ENCODE measurements at regions of chr2 and their contacts with region 1.

Region 1: DNA sequence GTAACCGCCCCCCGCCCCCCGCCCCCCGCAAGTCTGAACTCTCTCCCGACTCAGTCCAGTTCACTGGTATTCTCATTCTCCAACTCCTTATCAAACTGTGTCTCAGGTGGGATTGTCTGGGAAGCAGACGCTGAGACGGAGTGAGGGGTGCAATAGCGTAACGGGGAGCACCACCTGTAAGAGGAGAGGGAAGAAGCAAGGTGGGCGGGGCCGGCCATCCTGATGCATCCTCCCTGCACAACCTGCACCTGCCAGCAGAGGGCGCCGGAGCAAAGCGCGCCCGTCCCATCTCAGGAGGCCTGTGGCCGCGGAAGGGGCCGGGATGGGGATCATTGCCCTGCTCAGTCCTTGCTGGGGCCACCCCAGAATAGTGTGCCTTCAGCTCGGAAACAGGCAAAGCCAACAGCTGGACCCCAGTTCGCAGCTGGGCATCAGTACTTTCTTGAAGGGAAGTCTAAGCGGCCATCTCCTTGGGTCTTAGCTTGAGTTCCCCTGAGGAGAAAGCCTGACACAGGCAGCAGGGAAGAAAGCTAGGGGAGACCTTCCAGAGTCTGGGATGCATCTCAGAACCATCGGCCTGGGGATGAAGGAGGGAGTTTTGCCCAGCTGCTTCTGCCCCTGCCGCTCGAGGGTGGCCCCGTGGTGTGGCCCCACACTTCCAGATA is 208.0 kb downstream of the TFCP2L1 start:
- DNase-seq: peak; percentile 68 to 86
- H3K4me3 ChIP-seq: peak overlapping the region; percentile 27; the same call in 1 of the 2 replicates
- H3K27ac ChIP-seq: no peak overlapping the region
- H3K4me1 ChIP-seq: peaks cover 16% of the 10 kb centered on the region; the same call in 1 of the 2 replicates
- H3K27me3 ChIP-seq: 0 out of 2 replicates have a peak, but pooled peaks cover 5% of the 10 kb centered on the region
- CTCF ChIP-seq: peak; percentile 100

Region 2: GRCh38 chr2:120312861-120313694 is 763.9 kb before region 1 on chr2:
- CTCF ChIA-PET with region 1: no interaction called
- POLR2A ChIA-PET with region 1: no interaction called
- intact Hi-C with region 1: loop called (anchors 5 kb)
- DNase-seq: peak; percentile 77 to 90
- H3K4me3 ChIP-seq: no peak overlapping the region
- H3K27ac ChIP-seq: no peak overlapping the region
- H3K4me1 ChIP-seq: no peaks in the 10 kb centered on the region
- H3K27me3 ChIP-seq: no peaks in the 10 kb centered on the region
- CTCF ChIP-seq: peak; percentile 98

Region 3: DNA sequence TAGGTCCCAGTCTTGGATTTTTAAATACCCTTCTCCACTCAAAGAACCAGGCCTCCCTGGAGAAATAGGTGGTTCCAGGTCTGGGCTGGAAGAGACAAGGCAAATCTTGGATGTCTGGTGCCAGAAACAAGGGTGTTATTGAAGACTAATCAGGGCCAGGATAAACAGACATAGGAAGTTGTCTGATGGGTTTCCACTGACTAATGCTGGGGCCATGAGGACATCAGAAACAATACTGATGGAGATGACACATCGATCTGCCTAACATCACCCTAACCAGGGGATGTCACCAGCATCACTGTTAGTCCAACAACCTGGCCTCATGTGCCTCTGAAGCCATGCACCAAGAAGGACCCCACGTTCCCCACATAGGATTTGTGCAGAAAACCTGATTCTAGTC is 383.9 kb before region 1 on chr2:
- CTCF ChIA-PET with region 1: interaction called, 9 read pairs
- POLR2A ChIA-PET with region 1: interaction called, 11 read pairs
- intact Hi-C with region 1: loop called (anchors 1 kb)
- DNase-seq: no peak
- H3K4me3 ChIP-seq: no peak overlapping the region
- H3K27ac ChIP-seq: no peak overlapping the region
- H3K4me1 ChIP-seq: no peaks in the 10 kb centered on the region
- H3K27me3 ChIP-seq: peaks cover 68% of the 10 kb centered on the region
- CTCF ChIP-seq: no peak

Region 4: GRCh38 chr2:120914839-120915521 is 162.0 kb before region 1 on chr2:
- CTCF ChIA-PET with region 1: no interaction called
- POLR2A ChIA-PET with region 1: interaction called, 16 read pairs
- intact Hi-C with region 1: no loop called
- DNase-seq: peak; percentile 46 to 87
- H3K4me3 ChIP-seq: no peak overlapping the region
- H3K27ac ChIP-seq: no peak overlapping the region
- H3K4me1 ChIP-seq: peaks cover 21% of the 10 kb centered on the region
- H3K27me3 ChIP-seq: no peaks in the 10 kb centered on the region
- CTCF ChIP-seq: no peak

Region 5: DNA sequence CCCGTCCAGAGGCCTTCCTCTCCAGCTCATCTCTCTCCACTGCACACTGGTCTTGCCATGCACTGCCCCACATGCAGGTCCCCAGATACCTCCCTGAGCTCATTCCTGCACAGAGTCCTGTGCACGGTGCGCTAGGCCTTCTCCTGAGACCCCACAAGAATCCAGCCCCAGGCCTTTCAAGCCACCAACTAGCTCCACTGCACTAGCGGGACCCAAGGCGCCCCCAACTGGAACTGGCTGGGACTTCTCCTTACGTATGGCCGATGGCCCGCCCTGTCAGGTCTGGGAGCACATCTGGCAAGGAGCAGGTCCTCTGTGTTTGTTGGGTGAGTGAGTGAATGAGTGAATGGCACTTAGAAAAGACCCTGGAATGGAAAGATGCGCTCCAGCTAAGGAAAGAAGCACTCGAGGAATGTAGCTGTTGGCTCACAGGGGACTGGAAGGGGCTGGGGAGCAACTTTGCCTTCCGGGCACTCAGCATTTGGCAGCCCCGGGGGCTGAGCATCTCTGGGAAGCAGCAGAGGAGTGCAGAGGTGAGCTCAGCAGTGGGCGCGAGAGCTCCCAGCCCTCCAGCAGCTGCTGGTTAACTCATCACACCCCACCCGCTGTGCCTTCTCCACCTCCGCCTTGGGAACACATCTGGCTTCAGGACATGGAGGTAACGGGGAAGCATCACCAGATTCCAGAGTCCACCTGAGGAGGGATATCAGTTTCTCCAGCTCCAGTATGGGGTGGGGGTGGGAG is 118.2 kb before region 1 on chr2:
- CTCF ChIA-PET with region 1: no interaction called
- POLR2A ChIA-PET with region 1: no interaction called
- intact Hi-C with region 1: no loop called
- DNase-seq: no peak
- H3K4me3 ChIP-seq: no peak overlapping the region
- H3K27ac ChIP-seq: no peak overlapping the region
- H3K4me1 ChIP-seq: no peaks in the 10 kb centered on the region; the same call in 1 of the 2 replicates
- H3K27me3 ChIP-seq: peaks cover 10% of the 10 kb centered on the region
- CTCF ChIP-seq: peak; percentile 43; the same call in 1 of the 2 replicates

Region 6: DNA sequence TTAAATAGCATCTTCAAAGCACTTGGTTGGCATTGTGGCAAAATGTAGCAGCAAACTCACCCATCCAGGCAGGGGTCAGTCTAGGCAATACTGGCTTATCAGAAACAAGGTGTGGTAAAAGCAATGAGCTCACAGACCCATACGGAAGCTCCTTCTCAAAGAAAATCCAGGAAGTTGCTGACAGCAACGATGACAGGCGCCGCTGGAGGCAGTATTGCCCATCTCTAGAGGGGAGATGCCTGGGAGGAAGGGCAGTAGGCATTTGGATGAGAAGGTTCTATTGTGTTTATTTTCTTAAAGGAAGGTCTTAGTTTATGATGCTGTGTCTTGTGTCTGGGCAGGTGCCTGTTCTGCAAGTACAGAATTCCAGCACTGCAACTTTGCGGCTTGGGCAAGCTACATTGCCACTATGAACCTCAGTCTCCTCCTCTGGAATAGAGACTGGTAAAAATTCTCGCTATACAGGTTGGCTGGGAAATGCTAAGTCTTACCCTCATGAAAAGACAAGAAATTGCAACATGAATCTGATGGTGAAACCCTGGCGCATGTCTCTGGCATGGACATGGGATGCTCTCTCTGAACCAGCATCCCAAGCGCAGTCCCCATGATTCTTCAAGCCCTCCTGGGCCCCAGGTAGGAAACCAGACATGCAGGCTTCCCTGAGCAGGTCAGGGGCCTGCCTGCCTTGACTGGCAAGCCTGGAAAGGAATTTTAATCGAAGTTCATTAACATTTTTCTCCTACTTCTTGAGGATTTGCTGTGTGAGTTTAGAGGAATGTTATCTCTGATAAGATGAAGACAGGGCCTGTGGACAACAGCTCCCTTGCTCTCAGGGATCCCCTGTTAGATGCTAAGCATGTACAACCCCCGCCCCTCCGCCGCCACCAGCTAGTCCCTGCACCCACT is 52.0 kb after region 1 on chr2:
- CTCF ChIA-PET with region 1: interaction called, 3 read pairs
- POLR2A ChIA-PET with region 1: interaction called, 26 read pairs
- intact Hi-C with region 1: no loop called
- DNase-seq: peak; percentile 76 to 82
- H3K4me3 ChIP-seq: no peak overlapping the region
- H3K27ac ChIP-seq: no peak overlapping the region
- H3K4me1 ChIP-seq: peaks cover 6% of the 10 kb centered on the region
- H3K27me3 ChIP-seq: peaks cover 8% of the 10 kb centered on the region; the same call in 1 of the 2 replicates
- CTCF ChIP-seq: peak; percentile 93

Region 7: GRCh38 chr2:121530212-121530705 is 453.2 kb after region 1 on chr2:
- CTCF ChIA-PET with region 1: no interaction called
- POLR2A ChIA-PET with region 1: interaction called, 10 read pairs
- intact Hi-C with region 1: loop called (anchors 1 kb)
- DNase-seq: peak; percentile 68 to 81
- H3K4me3 ChIP-seq: peak overlapping the region; percentile 66
- H3K27ac ChIP-seq: peak overlapping the region; percentile 95
- H3K4me1 ChIP-seq: peaks cover 30% of the 10 kb centered on the region
- H3K27me3 ChIP-seq: no peaks in the 10 kb centered on the region
- CTCF ChIP-seq: no peak

Region 8: GRCh38 chr2:122451040-122451439 is 1374.0 kb after region 1 on chr2:
- CTCF ChIA-PET with region 1: no interaction called
- POLR2A ChIA-PET with region 1: no interaction called
- intact Hi-C with region 1: loop called (anchors 10 kb)
- DNase-seq: no peak
- H3K4me3 ChIP-seq: no peak overlapping the region
- H3K27ac ChIP-seq: no peak overlapping the region
- H3K4me1 ChIP-seq: no peaks in the 10 kb centered on the region
- H3K27me3 ChIP-seq: no peaks in the 10 kb centered on the region
- CTCF ChIP-seq: peak; percentile 83